HEK293 (cell line): ENCODE measurements at regions of chr19 and their contacts with region 1.

Region 1: GRCh38 chr19:43668406-43669158 is 1.4 kb downstream of the PLAUR start:
- H3K4me3 ChIP-seq: peak overlapping the region; percentile 19
- H3K27ac ChIP-seq: peak overlapping the region; percentile 56
- H3K4me1 ChIP-seq: peaks cover 42% of the 10 kb centered on the region
- CTCF ChIP-seq: no peak

Region 2: DNA sequence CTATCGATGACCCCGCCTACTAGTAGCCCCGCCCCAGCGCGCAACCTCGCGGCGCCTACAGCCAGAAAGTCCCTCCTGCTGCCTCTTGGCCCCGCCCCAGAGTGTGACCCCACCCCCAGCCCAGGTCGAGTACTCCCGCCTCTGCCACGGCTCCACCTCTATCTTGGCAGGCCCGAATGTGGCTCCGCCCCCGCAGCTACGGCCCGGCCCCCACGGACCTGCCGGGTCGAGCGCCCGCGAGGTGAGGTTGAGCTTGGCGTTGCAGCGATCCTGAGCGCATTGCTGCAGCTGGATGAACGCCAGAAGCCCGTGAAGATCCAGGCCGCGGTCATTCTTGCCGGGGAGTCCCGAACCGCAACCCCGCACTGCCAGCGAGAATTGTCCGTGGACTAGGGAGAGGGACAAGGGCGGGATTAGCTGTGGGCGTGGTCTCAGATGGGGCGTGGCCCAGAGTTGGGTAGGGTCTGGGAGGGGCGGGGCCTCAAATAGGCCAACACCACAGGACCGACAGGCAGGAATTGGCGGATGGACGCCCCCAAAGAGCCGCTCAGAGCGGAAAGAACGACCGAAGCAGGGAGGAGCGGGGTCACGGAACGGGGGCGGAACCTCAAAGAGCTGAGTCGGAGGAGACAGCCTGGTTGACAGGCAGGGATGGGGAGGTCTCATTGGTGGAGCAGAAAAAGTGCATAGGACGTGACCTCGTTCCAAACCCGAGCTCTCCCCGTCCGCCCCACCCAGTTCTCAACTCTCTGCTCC is 205.0 kb before region 1 on chr19:
- CTCF ChIA-PET with region 1: no interaction called
- POLR2A ChIA-PET with region 1: interaction called, 13 read pairs
- H3K4me3 ChIP-seq: peak overlapping the region; percentile 64
- H3K27ac ChIP-seq: peak overlapping the region; percentile 48; the same call in 1 of the 2 replicates
- H3K4me1 ChIP-seq: peaks cover 13% of the 10 kb centered on the region; the same call in 1 of the 2 replicates
- CTCF ChIP-seq: no peak

Region 3: DNA sequence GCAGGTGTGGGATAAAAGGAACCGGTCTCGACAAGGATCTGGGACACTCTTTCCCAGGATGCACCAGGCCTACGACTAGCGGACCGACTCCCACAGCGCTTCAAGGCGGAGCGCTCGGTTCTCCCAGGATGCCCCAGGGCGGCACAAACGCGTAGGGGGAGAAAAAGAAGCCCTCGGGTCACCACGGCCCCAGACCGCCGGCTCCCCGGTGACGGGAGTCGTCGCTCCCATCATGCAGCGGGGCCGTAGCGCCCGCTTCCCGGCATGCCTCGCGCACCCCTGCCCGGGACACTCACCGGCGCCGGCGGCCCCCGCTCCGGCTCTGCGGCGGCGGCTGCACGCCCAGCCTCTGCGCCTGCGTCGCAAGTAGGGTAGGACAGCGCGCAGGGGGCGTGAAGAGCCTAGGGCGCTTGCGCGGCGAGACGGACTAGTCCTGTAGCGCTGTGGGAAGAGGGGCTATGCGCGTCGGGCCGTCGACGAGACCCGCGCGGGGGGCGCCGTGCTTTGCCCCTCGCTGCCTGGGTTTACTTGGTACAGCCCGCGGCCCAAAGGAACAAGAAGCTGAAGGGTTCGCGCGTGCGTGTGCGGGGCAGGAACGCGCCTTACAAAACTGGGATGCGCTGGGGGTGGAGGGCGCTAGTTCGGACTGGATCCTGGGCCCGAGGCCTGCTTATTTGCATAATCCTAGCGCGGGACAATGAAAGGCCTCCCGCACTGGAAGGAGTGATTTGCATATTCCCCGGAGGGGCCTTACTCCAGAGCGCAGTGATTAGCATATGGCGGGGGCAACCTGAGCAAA is 49.1 kb before region 1 on chr19 and contains the start of gene ZNF428:
- CTCF ChIA-PET with region 1: interaction called, 3 read pairs
- POLR2A ChIA-PET with region 1: interaction called, 21 read pairs
- H3K4me3 ChIP-seq: peak within 1 kb of the TSS; percentile 49
- H3K27ac ChIP-seq: peak within 1 kb of the TSS; percentile 99
- H3K4me1 ChIP-seq: peaks cover 21% of the 10 kb centered on the region
- CTCF ChIP-seq: peak; percentile 90

Region 4: GRCh38 chr19:43678512-43679261 is 10.1 kb after region 1 on chr19:
- CTCF ChIA-PET with region 1: interaction called, 4 read pairs
- POLR2A ChIA-PET with region 1: interaction called, 23 read pairs
- H3K4me3 ChIP-seq: no peak overlapping the region
- H3K27ac ChIP-seq: no peak overlapping the region
- H3K4me1 ChIP-seq: peaks cover 13% of the 10 kb centered on the region
- CTCF ChIP-seq: no peak

Region 5: GRCh38 chr19:43738780-43739211 is 70.2 kb after region 1 on chr19:
- CTCF ChIA-PET with region 1: interaction called, 3 read pairs
- POLR2A ChIA-PET with region 1: interaction called, 15 read pairs
- H3K4me3 ChIP-seq: no peak overlapping the region
- H3K27ac ChIP-seq: no peak overlapping the region
- H3K4me1 ChIP-seq: no peaks in the 10 kb centered on the region
- CTCF ChIP-seq: no peak

Region 6: GRCh38 chr19:43765109-43765876 is 96.7 kb after region 1 on chr19:
- CTCF ChIA-PET with region 1: interaction called, 25 read pairs
- POLR2A ChIA-PET with region 1: interaction called, 24 read pairs
- H3K4me3 ChIP-seq: no peak overlapping the region
- H3K27ac ChIP-seq: peak overlapping the region; percentile 3; the same call in 1 of the 2 replicates
- H3K4me1 ChIP-seq: peaks cover 8% of the 10 kb centered on the region
- CTCF ChIP-seq: no peak